ENCODE measurements at regions of chr4 and their contacts with region 1.

Region 1: GRCh38 chr4:94451695-94452475 is at the start of gene PDLIM5:
- DNase-seq: peak; percentile 94
- H3K4me3 Mint-ChIP-seq: peak within 1 kb of the TSS; percentile 73
- H3K27ac Mint-ChIP-seq: peak within 1 kb of the TSS; percentile 85
- H3K4me1 Mint-ChIP-seq: peaks cover 31% of the 10 kb centered on the region
- H3K27me3 Mint-ChIP-seq: no peaks in the 10 kb centered on the region
- CTCF ChIP-seq: no peak
- total RNA-seq, gene PDLIM5: 151 and 158 TPM in 2 replicates

Region 2: GRCh38 chr4:94406668-94407437 is 45.0 kb before region 1 on chr4:
- CTCF ChIA-PET with region 1: interaction called, 41 read pairs
- POLR2A ChIA-PET with region 1: interaction called, 288 read pairs
- intact Hi-C with region 1: loop called (anchors 1 kb)
- DNase-seq: peak; percentile 86
- H3K4me3 Mint-ChIP-seq: no peak overlapping the region
- H3K27ac Mint-ChIP-seq: no peak overlapping the region
- H3K4me1 Mint-ChIP-seq: peaks cover 7% of the 10 kb centered on the region
- H3K27me3 Mint-ChIP-seq: no peaks in the 10 kb centered on the region
- CTCF ChIP-seq: peak; percentile 82

Region 3: DNA sequence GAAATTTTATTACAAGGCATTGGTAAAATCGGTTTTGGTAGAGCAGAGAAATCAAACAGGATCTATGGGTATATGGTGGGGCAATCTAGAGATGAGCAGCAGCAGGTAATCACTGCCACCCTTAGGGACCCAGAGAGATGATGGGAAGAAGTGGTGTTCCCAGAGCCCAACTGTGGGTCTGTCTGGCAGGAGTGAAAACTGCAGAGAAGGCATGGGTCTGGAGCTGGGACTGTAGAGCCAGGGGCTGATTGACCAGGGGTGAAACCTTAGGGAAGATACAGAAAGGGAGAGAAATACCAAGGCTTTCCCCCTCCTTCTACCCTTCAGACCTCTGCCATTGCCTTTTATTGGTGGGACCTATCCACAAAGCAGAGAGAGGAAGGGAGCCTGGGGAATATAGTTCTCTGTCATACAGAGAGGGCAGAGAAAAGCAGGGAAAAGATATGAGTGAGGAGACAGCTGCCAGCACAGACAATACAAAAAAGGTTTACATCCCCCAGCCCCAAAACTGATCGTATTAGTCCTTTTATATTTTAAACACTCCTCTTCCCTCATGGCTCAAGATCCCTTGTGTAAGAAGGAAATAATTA is 28.6 kb after region 1 on chr4:
- CTCF ChIA-PET with region 1: no interaction called
- POLR2A ChIA-PET with region 1: interaction called, 193 read pairs
- intact Hi-C with region 1: no loop called
- DNase-seq: no peak
- H3K4me3 Mint-ChIP-seq: no peak overlapping the region
- H3K27ac Mint-ChIP-seq: peak overlapping the region; percentile 47
- H3K4me1 Mint-ChIP-seq: peaks cover 26% of the 10 kb centered on the region
- H3K27me3 Mint-ChIP-seq: no peaks in the 10 kb centered on the region
- CTCF ChIP-seq: no peak

Region 4: GRCh38 chr4:94516067-94516466 is 64.2 kb after region 1 on chr4:
- CTCF ChIA-PET with region 1: no interaction called
- POLR2A ChIA-PET with region 1: interaction called, 47 read pairs
- intact Hi-C with region 1: no loop called
- DNase-seq: peak; percentile 52
- H3K4me3 Mint-ChIP-seq: no peak overlapping the region
- H3K27ac Mint-ChIP-seq: peak overlapping the region; percentile 86
- H3K4me1 Mint-ChIP-seq: peaks cover 28% of the 10 kb centered on the region
- H3K27me3 Mint-ChIP-seq: no peaks in the 10 kb centered on the region
- CTCF ChIP-seq: no peak

Region 5: DNA sequence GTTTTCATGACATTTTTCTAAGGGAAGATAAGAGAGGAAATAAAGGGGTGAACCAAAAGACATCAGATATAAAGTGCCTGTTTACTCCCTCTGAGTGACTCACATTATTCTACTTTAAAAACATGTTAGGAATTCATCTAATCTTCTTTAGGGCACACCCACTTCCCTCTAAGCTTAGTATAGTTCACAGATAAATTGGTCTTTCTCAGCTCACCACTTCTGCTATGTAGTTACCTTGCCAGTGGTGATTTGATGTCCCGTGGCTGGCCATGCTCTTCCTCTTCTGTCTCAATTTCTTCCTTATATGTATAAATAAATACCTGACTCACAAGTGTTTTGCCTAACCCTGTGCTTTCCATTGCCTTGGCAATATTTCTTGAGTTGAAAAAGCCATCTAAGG is 96.7 kb after region 1 on chr4:
- CTCF ChIA-PET with region 1: no interaction called
- POLR2A ChIA-PET with region 1: interaction called, 19 read pairs
- intact Hi-C with region 1: loop called (anchors 1 kb)
- DNase-seq: peak; percentile 76
- H3K4me3 Mint-ChIP-seq: peak overlapping the region; percentile 37
- H3K27ac Mint-ChIP-seq: peak overlapping the region; percentile 91
- H3K4me1 Mint-ChIP-seq: peaks cover 32% of the 10 kb centered on the region
- H3K27me3 Mint-ChIP-seq: no peaks in the 10 kb centered on the region
- CTCF ChIP-seq: no peak

Region 6: DNA sequence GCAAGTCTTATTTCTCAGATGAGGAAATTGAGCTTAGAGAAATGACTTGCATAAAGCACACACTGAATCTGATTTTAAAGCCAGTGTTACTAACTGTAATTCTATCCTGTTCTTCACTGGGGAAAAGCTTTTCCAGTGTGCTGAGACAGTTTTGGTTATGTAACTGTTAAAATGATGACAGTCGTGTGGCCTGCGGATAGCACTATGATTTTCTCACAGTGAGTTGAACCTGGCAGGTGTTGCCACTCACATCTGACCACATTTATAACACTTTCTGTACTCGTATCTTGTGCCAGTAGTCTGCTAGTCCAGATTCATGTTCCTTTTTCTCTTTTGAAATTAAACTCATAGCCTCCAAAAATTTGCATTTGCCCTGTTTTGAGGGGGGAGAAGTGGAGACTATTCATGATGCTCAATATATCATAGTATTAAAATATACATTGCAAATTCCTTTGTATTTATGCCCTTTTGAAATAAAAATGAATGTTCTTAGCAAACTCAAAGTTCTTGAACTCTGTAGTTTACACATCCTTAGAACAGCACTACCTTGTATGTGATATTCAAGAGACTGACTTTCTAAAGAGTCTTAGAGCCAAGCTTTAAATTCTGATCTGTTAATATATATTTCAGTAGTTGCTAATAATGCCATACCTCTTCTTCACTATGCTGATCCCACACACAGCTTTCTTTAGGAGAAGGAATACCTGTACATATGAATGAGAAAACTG is 132.2 kb after region 1 on chr4:
- CTCF ChIA-PET with region 1: no interaction called
- POLR2A ChIA-PET with region 1: interaction called, 18 read pairs
- intact Hi-C with region 1: loop called (anchors 5 kb)
- DNase-seq: no peak
- H3K4me3 Mint-ChIP-seq: no peak overlapping the region
- H3K27ac Mint-ChIP-seq: no peak overlapping the region
- H3K4me1 Mint-ChIP-seq: peaks cover 6% of the 10 kb centered on the region
- H3K27me3 Mint-ChIP-seq: no peaks in the 10 kb centered on the region
- CTCF ChIP-seq: no peak

Region 7: GRCh38 chr4:94669672-94670664 is 218.1 kb after region 1 on chr4:
- CTCF ChIA-PET with region 1: no interaction called
- POLR2A ChIA-PET with region 1: no interaction called
- intact Hi-C with region 1: no loop called
- DNase-seq: no peak
- H3K4me3 Mint-ChIP-seq: no peak overlapping the region
- H3K27ac Mint-ChIP-seq: no peak overlapping the region
- H3K4me1 Mint-ChIP-seq: no peaks in the 10 kb centered on the region
- H3K27me3 Mint-ChIP-seq: no peaks in the 10 kb centered on the region
- CTCF ChIP-seq: no peak

Region 8: DNA sequence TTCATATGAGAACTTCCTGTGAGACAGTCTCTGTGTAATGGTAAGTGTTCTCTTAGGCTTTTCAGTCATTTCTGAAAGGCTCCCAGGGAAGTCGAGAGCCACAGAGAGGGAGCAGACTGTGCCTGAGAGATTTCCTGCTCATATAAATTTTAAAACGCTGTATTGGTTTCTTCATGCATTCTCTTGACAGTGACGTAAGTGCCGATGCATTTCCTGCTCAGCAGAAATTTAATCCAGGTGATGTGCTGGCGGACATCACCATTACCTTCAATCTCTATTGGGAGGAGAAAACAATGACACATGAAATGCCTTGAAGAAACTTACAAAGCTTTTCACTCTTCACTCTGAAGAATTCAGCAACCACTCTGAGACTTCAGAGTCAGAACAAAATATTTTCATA is 689.5 kb after region 1 on chr4:
- CTCF ChIA-PET with region 1: no interaction called
- POLR2A ChIA-PET with region 1: no interaction called
- intact Hi-C with region 1: no loop called
- DNase-seq: no peak
- H3K4me3 Mint-ChIP-seq: no peak overlapping the region
- H3K27ac Mint-ChIP-seq: no peak overlapping the region
- H3K4me1 Mint-ChIP-seq: no peaks in the 10 kb centered on the region
- H3K27me3 Mint-ChIP-seq: no peaks in the 10 kb centered on the region
- CTCF ChIP-seq: no peak